ENCODE measurements at regions of chr13 and their contacts with region 1.

Region 1: DNA sequence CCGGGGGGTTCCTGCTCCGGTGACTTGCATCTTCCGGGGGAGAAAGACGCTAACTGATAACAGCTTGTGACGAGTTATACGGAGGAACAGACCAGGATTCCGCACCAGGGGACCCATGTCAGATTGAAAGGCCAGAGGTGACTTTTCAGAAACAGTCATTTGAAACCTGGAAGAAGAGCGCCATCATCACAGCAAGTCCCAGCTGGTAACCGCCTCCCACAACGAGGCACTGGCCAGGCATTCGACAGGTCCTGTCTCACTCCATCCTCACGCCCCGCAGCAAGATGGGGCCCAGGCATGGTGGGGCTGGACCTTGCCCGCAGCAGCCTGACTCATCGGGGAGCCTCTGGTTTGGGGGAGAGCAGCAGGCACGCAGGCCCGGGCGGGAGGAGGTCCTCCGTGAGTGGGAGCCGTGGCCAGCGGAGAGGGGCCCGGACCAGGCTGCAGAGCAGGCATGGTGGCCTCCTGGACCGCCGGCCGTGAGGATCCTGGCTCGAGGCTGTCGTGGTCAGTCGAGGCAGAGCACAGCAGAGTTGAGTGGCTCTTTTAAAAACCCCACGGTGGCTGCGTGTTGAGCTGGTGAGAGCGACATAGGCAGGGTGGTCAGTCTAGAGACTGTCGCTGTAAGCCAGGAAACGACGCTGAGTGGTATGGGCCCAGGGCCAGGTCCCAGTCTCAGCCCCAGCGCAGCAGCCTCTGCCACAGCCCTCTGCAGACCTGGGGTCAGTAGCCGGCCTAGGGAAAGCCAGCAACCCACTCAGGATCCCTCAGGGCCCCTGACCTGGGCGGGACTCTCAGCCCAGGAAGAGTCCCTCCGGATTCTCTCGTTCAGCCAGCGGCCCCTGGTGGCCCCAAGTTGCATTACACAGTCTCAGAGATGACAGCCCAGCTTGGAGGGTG is 94.9 kb upstream of the MCF2L start:
- DNase-seq: peak; percentile 90
- CTCF ChIP-seq: peak; percentile 97

Region 2: DNA sequence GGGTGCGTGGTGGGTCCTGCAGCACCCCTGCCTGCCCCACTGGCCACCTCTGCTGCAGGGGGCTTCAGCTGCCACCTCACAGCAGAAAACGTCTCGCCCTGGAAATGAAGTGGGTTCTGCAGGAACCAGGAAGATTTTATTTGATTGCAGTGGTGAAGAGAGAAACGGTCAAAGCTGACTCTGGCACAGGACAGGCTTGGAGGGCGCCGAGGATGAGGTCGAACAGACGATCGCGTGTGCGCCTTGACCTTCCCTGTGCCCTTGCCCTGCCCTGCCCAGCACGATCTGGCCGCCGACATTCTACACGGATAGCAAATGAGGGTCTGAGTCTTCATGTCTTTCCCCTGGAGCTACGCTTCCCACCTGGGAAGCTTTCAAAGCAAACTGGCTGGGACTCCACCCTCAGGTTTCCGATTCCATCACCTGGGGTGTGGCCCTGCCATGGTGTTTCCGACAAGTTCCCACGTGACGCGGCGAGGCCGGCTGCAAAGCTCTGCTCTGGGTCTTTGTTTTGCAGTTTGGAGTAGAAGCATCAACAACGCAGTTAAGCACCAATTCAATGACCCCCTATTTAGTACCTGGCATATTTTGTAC is 235.8 kb before region 1 on chr13:
- CTCF ChIA-PET with region 1: interaction called, 104 read pairs
- POLR2A ChIA-PET with region 1: no interaction called
- DNase-seq: no peak
- CTCF ChIP-seq: no peak

Region 3: GRCh38 chr13:112643759-112644459 is 230.2 kb before region 1 on chr13:
- CTCF ChIA-PET with region 1: interaction called, 104 read pairs
- POLR2A ChIA-PET with region 1: no interaction called
- DNase-seq: no peak
- CTCF ChIP-seq: no peak

Region 4: GRCh38 chr13:112652512-112653070 is 221.5 kb before region 1 on chr13:
- CTCF ChIA-PET with region 1: interaction called, 18 read pairs
- POLR2A ChIA-PET with region 1: no interaction called
- DNase-seq: no peak
- CTCF ChIP-seq: no peak

Region 5: DNA sequence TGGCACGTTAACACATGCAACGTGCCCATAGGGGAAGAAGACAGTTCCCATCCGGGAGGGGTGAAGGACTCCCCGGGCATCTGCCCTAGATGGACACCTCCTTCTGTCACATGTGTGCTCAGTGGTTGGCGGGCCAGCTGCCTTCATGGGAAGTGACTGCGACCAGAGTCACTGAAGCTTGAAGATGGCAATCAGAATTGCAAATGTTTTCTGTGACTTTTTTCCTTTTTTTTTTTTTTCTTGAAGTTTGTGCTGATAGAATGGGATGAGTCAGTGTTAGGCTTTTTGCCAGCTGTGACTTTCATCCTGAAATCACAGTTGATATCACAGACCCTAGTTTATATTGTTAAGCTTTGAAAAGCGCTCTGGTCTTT is 14.3 kb before region 1 on chr13:
- CTCF ChIA-PET with region 1: interaction called, 25 read pairs
- POLR2A ChIA-PET with region 1: no interaction called
- DNase-seq: peak; percentile 55
- CTCF ChIP-seq: no peak

Region 6: DNA sequence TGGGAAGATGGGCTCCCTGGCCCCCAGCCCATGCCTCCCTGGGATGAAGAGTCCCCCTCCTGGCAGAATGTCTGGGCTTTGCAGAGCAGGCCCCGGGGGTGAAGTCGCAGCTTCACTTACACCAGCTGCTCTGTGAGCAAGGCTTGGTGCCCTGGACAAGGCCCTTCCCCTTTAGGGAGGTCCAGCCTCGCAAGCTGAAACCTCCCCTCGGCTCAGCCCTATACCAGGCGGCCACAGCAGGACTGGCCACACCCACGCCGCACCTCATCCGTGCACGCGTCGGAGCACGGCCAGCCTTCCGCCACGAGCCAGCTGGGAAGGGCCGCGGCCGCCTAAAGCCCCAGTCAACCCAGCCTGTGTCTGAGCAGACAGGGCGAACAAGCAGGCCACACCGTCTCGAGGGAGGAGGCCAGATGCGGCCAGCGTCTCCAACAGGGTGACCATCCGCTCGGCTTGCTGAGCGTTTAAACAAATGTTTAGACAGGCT is 11.7 kb after region 1 on chr13:
- CTCF ChIA-PET with region 1: interaction called, 20 read pairs
- POLR2A ChIA-PET with region 1: no interaction called
- DNase-seq: no peak
- CTCF ChIP-seq: no peak

Region 7: DNA sequence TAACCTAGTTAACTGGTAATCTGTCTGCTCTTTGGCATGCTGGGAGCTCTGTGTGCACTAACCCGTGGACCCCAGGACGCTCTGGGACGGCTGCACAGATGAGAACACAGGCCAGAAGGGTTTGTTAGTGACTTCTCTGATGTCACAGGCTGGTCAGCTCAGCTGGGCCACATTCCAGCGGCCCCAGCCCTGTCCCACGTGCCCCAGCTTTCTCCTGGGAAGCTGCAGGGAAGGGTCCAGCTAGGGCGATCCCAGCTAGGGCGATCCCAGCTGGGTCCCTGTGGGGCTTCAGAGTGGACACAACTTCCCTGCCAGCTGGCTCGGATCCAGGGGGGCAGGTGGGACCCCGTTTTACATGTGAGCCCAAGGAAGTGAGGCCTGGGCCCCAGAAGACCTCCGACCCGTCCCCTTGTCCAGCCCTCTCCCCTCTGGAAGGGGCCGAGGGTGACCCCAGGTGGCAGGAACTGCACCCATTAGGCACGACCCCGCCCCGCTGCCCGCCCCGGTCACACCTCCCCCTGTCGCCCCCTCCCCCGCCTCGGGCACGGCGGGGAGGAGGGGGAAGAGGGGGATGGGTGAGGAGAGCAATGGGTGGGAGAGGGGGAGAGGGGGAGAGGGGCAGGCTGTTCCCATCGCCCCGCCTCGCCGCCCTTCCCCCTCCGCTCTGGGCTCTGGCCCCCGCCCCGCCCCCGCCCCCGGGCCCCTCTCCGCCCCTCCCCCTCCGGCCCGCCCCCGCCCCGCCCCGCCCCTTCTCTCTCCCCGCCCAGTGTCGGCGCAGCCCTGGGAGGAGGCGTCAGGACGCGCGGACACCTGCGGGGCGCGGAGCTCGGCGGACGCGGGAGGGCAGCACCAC is 19.7 kb after region 1 on chr13:
- CTCF ChIA-PET with region 1: interaction called, 11 read pairs
- POLR2A ChIA-PET with region 1: no interaction called
- DNase-seq: peak; percentile 84
- CTCF ChIP-seq: no peak